WTC11 (cell line): ENCODE measurements at regions of chr9 and their contacts with region 1.

Region 1: GRCh38 chr9:124708633-124709291 is 62.3 kb downstream of the NR6A1 start:
- DNase-seq: no peak
- ATAC-seq: no peak
- H3K4me3 Mint-ChIP-seq: no peak overlapping the region
- H3K27ac Mint-ChIP-seq: peak overlapping the region; percentile 91; the same call in 1 of the 2 replicates
- H3K4me1 Mint-ChIP-seq: peaks cover 50% of the 10 kb centered on the region
- H3K27me3 Mint-ChIP-seq: no peaks in the 10 kb centered on the region
- CTCF ChIP-seq: no peak

Region 2: DNA sequence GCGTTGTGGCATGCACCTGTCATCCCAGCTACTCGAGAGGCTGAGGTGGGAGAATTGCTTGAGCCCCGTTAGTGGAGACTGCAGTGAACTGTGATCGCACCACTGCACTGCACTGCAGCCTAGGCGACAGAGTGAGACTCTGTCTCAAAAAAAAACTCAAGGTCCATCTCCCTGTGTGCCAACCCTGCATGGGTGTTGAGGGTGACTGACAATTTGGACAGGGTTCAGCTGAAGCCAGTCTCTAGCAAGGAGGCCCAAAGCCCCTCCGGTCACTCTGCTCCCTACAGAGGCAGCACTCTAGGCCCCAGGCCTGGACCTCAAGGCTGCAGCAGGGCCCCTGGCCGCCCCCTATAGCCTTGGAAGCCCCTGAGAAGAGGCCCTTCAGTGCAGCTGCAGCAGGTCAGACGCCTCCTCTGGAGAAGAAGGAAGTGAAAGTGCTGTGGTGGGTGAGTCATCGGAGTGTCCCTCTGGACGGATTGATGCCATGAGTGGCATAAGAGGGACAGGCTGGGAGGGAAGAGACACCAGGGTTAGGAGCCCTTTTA is 490.3 kb before region 1 on chr9:
- CTCF ChIA-PET with region 1: no interaction called
- POLR2A ChIA-PET with region 1: no interaction called
- DNase-seq: no peak
- ATAC-seq: no peak
- H3K4me3 Mint-ChIP-seq: no peak overlapping the region
- H3K27ac Mint-ChIP-seq: no peak overlapping the region
- H3K4me1 Mint-ChIP-seq: no peaks in the 10 kb centered on the region
- H3K27me3 Mint-ChIP-seq: no peaks in the 10 kb centered on the region
- CTCF ChIP-seq: no peak

Region 3: GRCh38 chr9:124505006-124505900 is 203.5 kb before region 1 on chr9:
- CTCF ChIA-PET with region 1: no interaction called
- POLR2A ChIA-PET with region 1: no interaction called
- DNase-seq: peak; percentile 49
- ATAC-seq: peak; percentile 51
- H3K4me3 Mint-ChIP-seq: peak overlapping the region; percentile 70
- H3K27ac Mint-ChIP-seq: no peak overlapping the region
- H3K4me1 Mint-ChIP-seq: peaks cover 13% of the 10 kb centered on the region
- H3K27me3 Mint-ChIP-seq: peaks cover 59% of the 10 kb centered on the region
- CTCF ChIP-seq: no peak

Region 4: DNA sequence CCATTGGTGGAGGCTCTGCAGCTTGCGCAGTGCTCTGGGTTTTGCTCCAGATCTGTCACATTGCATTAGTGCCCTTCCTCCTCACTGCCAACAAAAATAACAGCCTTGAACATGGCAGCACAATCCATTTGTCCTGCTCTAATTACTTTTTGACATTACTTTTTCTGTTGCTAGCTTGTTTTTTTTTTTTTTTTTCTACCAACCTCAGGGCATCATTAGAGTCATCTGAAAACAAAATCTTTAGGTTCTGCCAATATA is 84.1 kb before region 1 on chr9:
- CTCF ChIA-PET with region 1: interaction called, 10 read pairs
- POLR2A ChIA-PET with region 1: no interaction called
- DNase-seq: no peak
- ATAC-seq: no peak
- H3K4me3 Mint-ChIP-seq: no peak overlapping the region
- H3K27ac Mint-ChIP-seq: no peak overlapping the region
- H3K4me1 Mint-ChIP-seq: peaks cover 23% of the 10 kb centered on the region
- H3K27me3 Mint-ChIP-seq: no peaks in the 10 kb centered on the region
- CTCF ChIP-seq: no peak

Region 5: DNA sequence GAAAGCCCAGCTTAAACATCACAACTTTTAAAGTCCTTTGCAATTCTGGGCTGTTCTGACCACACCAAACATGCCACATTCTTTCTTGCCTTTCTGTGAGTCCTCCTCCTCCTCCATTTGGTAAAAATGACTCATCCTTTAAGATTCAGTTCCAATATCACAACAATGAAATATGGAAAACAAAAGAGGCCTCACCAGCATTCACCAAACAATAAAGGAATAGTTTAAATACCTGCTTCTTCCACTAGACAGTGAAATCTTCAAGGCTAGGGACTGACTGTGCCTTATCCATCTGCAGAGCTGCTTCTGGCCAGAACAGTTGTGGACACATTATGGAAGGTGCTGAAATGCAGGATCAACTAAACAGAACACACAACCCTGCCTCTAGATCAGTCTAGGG is 26.4 kb after region 1 on chr9:
- CTCF ChIA-PET with region 1: interaction called, 10 read pairs
- POLR2A ChIA-PET with region 1: no interaction called
- DNase-seq: no peak
- ATAC-seq: peak; percentile 69
- H3K4me3 Mint-ChIP-seq: peak overlapping the region; percentile 1; the same call in 1 of the 2 replicates
- H3K27ac Mint-ChIP-seq: peak overlapping the region; percentile 90
- H3K4me1 Mint-ChIP-seq: peaks cover 28% of the 10 kb centered on the region
- H3K27me3 Mint-ChIP-seq: no peaks in the 10 kb centered on the region
- CTCF ChIP-seq: no peak

Region 6: DNA sequence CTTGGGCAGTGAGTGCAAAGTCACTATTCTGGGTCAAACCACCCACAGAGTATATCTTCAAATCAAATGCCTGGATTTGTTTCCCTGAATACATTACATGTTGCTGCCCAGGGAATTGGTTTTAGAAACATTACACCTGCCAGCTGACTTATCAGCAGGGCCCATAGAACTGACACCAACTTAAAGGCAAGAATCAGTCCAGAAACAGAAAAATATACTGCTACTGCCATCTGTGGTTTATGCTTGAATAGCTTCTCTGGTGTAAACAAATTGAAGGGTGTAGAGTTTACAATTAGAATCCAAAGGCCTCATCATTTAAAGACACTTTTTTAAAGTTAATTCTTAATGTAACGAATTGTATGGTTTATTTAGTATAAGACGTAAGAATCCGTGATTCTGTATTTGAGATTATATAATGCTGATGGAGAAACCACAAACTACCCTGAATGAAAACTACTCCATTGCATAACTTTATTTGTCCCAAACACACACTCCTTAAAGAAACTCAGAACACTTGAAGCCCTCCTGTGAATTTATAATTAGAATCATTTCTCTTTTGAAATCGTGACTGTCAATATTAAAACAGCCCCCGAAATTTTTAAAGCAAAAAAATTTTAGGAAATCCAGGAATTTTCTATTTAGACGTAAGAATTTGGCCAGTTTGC is 56.1 kb after region 1 on chr9:
- CTCF ChIA-PET with region 1: interaction called, 30 read pairs
- POLR2A ChIA-PET with region 1: interaction called, 3 read pairs
- DNase-seq: no peak
- ATAC-seq: 0 out of 2 replicates have a peak, but pooled peaks have one; percentile 12
- H3K4me3 Mint-ChIP-seq: peak overlapping the region; percentile 47
- H3K27ac Mint-ChIP-seq: 0 out of 2 replicates have a peak overlapping the region, but pooled peaks have one; percentile 46
- H3K4me1 Mint-ChIP-seq: peaks cover 93% of the 10 kb centered on the region
- H3K27me3 Mint-ChIP-seq: no peaks in the 10 kb centered on the region; the same call in none of the 2 replicates
- CTCF ChIP-seq: no peak